GM12878 (cell line): ENCODE measurements at regions of chr3 and their contacts with region 1.

Region 1: DNA sequence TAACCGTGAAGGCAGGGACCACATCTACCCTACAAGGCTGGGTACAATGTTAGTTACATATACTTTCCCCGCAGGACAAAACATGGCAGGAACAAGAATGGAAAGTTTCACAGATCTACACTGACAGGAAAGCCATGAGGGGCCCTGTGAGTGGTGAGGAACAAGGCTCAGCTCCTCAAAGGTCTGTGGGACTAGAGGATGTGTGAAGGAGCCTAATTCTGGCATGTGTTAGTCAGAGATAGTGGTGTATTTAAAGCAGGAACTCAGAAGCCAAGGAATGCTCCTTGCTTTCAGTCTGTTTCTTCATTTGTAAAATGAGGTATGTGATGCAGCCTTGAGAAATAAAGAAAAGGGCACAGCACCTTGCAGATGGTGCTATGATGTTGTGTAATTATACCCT is 25.1 kb downstream of the ETV5 start:
- DNase-seq: no peak
- ATAC-seq: no peak
- H3K4me3 ChIP-seq: no peak overlapping the region
- H3K27ac ChIP-seq: no peak overlapping the region
- H3K4me1 ChIP-seq: no peaks in the 10 kb centered on the region
- H3K27me3 ChIP-seq: no peaks in the 10 kb centered on the region; a peak in 1 of 4 replicates
- CTCF ChIP-seq: no peak
- EP300 ChIP-seq: no peak
- POLR2A ChIP-seq: no peak
- RAD21 ChIP-seq: no peak

Region 2: DNA sequence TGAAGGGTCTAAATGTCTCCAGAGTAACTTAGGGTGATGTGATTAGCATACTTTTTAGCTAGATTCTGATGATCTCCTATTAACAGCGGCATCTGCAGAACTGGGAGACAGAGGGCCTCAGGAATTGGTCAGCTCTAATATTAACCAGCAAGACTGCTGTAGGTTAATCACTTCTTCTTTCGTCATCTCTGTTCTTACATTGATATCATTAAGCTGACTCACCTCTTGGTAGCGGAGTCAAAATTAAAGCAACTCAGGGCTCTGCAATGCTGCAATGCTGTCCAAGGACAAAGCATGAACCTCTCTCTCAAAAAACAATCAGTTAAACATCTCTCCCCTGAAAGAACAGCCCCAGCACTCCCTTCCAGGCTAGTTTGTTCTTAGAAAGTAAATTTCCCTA is 88.4 kb before region 1 on chr3:
- CTCF ChIA-PET with region 1: no interaction called
- POLR2A ChIA-PET with region 1: no interaction called
- RAD21 ChIA-PET with region 1: no interaction called
- SMC1A ChIA-PET with region 1: no interaction called
- in situ Hi-C with region 1: no loop called
- intact Hi-C with region 1: no loop called
- DNase-seq: no peak
- ATAC-seq: no peak
- H3K4me3 ChIP-seq: no peak overlapping the region
- H3K27ac ChIP-seq: no peak overlapping the region
- H3K4me1 ChIP-seq: no peaks in the 10 kb centered on the region
- H3K27me3 ChIP-seq: no peaks in the 10 kb centered on the region; a peak in 1 of 4 replicates
- CTCF ChIP-seq: no peak
- EP300 ChIP-seq: no peak
- POLR2A ChIP-seq: no peak
- RAD21 ChIP-seq: no peak

Region 3: GRCh38 chr3:186067360-186068242 is 16.1 kb before region 1 on chr3:
- CTCF ChIA-PET with region 1: no interaction called
- POLR2A ChIA-PET with region 1: interaction called, 4 read pairs
- RAD21 ChIA-PET with region 1: interaction called, 14 read pairs
- SMC1A ChIA-PET with region 1: interaction called, 30 read pairs
- in situ Hi-C with region 1: no loop called
- intact Hi-C with region 1: no loop called
- DNase-seq: no peak
- ATAC-seq: peak; percentile 30; the same call in 1 of the 3 replicates
- H3K4me3 ChIP-seq: peak overlapping the region; percentile 16; the same call in 1 of the 2 replicates
- H3K27ac ChIP-seq: peak overlapping the region; percentile 27; the same call in 1 of the 2 replicates
- H3K4me1 ChIP-seq: no peaks in the 10 kb centered on the region; the same call in 1 of the 2 replicates
- H3K27me3 ChIP-seq: no peaks in the 10 kb centered on the region
- CTCF ChIP-seq: no peak
- EP300 ChIP-seq: no peak
- POLR2A ChIP-seq: no peak
- RAD21 ChIP-seq: no peak

Region 4: DNA sequence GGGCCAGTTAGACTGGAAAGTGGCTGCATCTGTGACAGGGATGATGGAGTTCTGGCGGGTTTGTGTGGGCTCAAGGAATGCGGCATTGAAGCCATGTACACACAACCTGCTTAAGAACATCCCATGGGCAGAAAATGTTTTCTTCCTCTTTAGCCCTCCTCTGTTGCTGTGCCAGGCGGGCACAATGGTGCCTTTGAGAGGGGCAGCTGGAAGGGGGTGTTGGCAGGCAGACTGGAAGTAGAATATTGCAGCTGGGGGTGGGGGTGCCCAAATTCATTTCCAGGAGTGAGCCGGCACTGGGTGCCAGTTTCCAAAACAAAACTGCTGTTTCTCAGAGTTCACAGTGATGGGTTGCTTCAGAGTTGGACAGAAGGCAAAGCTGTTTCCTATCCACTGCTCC is 117.0 kb after region 1 on chr3:
- CTCF ChIA-PET with region 1: no interaction called
- POLR2A ChIA-PET with region 1: no interaction called
- RAD21 ChIA-PET with region 1: no interaction called
- SMC1A ChIA-PET with region 1: no interaction called
- in situ Hi-C with region 1: no loop called
- intact Hi-C with region 1: no loop called
- DNase-seq: no peak
- ATAC-seq: no peak
- H3K4me3 ChIP-seq: no peak overlapping the region
- H3K27ac ChIP-seq: no peak overlapping the region
- H3K4me1 ChIP-seq: no peaks in the 10 kb centered on the region
- H3K27me3 ChIP-seq: peaks cover 0 to 4% of the 10 kb centered on the region in 2 experiments; a peak in 2 of 4 replicates
- CTCF ChIP-seq: no peak
- EP300 ChIP-seq: no peak
- POLR2A ChIP-seq: no peak
- RAD21 ChIP-seq: no peak